SK-N-SH (cell line): ENCODE measurements at regions of chr17 and their contacts with region 1.

Region 1: DNA sequence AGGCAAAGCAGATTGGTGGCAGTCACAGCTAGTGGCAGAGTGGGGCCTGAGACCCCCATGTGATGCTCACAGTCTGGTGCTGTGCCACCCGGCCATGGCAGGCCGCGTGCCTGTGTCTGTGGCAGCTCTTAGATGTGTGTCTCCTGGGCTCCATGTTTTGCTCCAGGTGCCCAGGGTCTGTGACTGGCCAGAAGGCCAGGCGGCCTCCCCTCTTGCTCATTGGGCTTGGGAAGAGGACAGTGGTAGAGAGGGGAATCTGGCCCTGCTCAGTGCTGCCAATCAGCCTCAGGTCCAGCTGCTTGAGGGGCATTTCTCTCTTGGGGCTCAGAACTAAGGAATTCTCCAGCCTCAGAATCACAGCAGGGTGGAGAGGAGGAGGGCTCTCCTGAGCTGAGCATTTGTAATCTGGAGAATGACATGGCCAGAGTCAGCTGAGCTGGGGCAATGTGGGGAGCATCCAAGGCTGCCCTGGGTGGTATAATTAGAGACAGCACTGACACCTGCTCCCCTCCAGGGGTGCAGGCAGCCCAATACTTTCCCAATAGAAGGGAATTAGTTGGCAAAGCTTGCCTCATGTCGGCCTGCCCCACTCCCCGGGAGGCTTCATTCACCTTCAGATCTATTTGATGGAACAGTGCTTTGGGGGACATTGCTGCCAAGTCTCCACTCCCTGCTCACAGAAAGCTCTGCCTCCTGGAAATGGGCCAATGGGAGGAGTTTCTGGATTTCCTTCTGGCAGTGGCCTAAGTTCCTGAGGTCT is 2.7 kb upstream of the LASP1NB start:
- DNase-seq: peak; percentile 52
- H3K4me3 ChIP-seq: no peak overlapping the region
- H3K27ac ChIP-seq: peak overlapping the region; percentile 49 to 67; a peak in 3 of 4 replicates
- H3K4me1 ChIP-seq: peaks cover 9 to 27% of the 10 kb centered on the region in 2 experiments; a peak in 2 of 4 replicates
- H3K27me3 ChIP-seq: no peaks in the 10 kb centered on the region
- CTCF ChIP-seq: no peak
- EP300 ChIP-seq: no peak; a peak in 1 of 4 replicates
- RAD21 ChIP-seq: no peak

Region 2: GRCh38 chr17:38379438-38379837 is 543.3 kb before region 1 on chr17:
- CTCF ChIA-PET with region 1: no interaction called
- POLR2A ChIA-PET with region 1: no interaction called
- DNase-seq: no peak
- H3K4me3 ChIP-seq: no peak overlapping the region
- H3K27ac ChIP-seq: no peak overlapping the region
- H3K4me1 ChIP-seq: no peaks in the 10 kb centered on the region
- H3K27me3 ChIP-seq: no peaks in the 10 kb centered on the region
- CTCF ChIP-seq: no peak
- EP300 ChIP-seq: no peak
- RAD21 ChIP-seq: no peak

Region 3: DNA sequence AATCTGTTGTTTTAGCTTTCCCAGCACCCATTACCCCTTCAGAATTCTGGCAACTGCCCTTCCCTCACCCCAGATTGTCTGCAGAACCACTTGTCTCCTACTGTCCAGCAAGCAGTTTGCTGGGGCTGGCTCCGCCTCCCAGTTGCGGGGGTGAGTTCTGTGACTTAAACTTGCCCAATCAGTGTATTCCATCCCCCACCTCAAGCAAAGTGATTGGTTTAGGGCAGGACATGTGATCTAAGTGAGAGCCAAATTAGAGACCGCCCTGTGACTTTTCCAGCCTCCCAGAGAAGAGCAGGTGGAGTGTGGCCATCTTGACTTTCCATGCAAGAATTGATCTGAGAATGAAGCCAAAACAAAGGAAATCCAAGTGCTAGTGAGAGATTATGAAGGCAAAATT is 294.3 kb before region 1 on chr17:
- CTCF ChIA-PET with region 1: no interaction called
- POLR2A ChIA-PET with region 1: no interaction called
- DNase-seq: peak; percentile 58
- H3K4me3 ChIP-seq: no peak overlapping the region
- H3K27ac ChIP-seq: no peak overlapping the region
- H3K4me1 ChIP-seq: no peaks in the 10 kb centered on the region
- H3K27me3 ChIP-seq: no peaks in the 10 kb centered on the region; the same call in 1 of the 2 replicates
- CTCF ChIP-seq: no peak
- EP300 ChIP-seq: no peak
- RAD21 ChIP-seq: no peak

Region 4: GRCh38 chr17:38868817-38869525 is 53.7 kb before region 1 on chr17:
- CTCF ChIA-PET with region 1: interaction called, 3 read pairs
- POLR2A ChIA-PET with region 1: interaction called, 39 read pairs
- DNase-seq: peak; percentile 64
- H3K4me3 ChIP-seq: peak overlapping the region; percentile 94 to 97
- H3K27ac ChIP-seq: peak overlapping the region; percentile 89 to 96
- H3K4me1 ChIP-seq: peaks cover 19 to 28% of the 10 kb centered on the region in 2 experiments; a peak in 3 of 4 replicates
- H3K27me3 ChIP-seq: no peaks in the 10 kb centered on the region
- CTCF ChIP-seq: peak; percentile 52
- EP300 ChIP-seq: peak in 1 of 2 experiments; percentile 11; a peak in 2 of 4 replicates
- RAD21 ChIP-seq: 0 out of 2 replicates have a peak, but pooled peaks have one; percentile 0